Common myeloid progenitor, CD34-positive (primary cell): ENCODE measurements at regions of chr6 and their contacts with region 1.

Region 1: GRCh38 chr6:136737871-136738691 is 54.2 kb downstream of the MAP3K5 start:
- DNase-seq: peak; percentile 40 to 73 (median 62)
- H3K4me3 ChIP-seq: peak overlapping the region in 4 of 7 experiments; percentile 19 to 72 (median 58)
- H3K27ac ChIP-seq: peak overlapping the region; percentile 77 to 82
- H3K4me1 ChIP-seq: peaks cover 8 to 52% (median 30%) of the 10 kb centered on the region in 4 experiments
- H3K27me3 ChIP-seq: no peaks in the 10 kb centered on the region

Region 2: GRCh38 chr6:136711644-136712043 is 26.4 kb before region 1 on chr6:
- CTCF ChIA-PET with region 1: interaction called, 14 read pairs
- POLR2A ChIA-PET with region 1: no interaction called
- DNase-seq: no peak
- H3K4me3 ChIP-seq: no peak overlapping the region
- H3K27ac ChIP-seq: no peak overlapping the region
- H3K4me1 ChIP-seq: peaks cover 0 to 20% (median 8%) of the 10 kb centered on the region in 4 experiments
- H3K27me3 ChIP-seq: no peaks in the 10 kb centered on the region

Region 3: GRCh38 chr6:136719280-136720044 is 18.6 kb before region 1 on chr6:
- CTCF ChIA-PET with region 1: interaction called, 19 read pairs
- POLR2A ChIA-PET with region 1: interaction called, 4 read pairs
- DNase-seq: no peak
- H3K4me3 ChIP-seq: no peak overlapping the region
- H3K27ac ChIP-seq: peak overlapping the region in 1 of 2 experiments; percentile 2
- H3K4me1 ChIP-seq: peaks cover 5 to 47% (median 38%) of the 10 kb centered on the region in 4 experiments
- H3K27me3 ChIP-seq: no peaks in the 10 kb centered on the region

Region 4: DNA sequence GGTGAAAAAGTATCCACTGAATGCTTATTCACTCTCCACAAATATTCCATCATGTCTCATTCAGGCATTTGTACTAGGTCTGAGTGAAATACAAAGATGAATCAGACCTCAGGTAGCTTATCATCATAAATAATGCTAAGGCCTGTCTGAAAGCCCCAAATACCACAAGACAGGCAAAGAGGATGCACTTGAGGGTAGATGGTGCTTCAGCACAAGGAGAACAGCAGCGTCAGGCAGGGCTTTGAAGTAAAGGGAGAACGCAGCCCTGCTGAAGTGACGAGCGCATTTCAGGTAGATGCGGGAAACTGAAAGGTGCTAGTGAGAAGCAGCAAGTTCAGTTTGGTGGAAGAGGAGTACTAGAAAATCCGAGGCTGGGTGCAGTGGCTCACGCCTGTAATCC is 15.5 kb after region 1 on chr6:
- CTCF ChIA-PET with region 1: interaction called, 13 read pairs
- POLR2A ChIA-PET with region 1: interaction called, 3 read pairs
- DNase-seq: peak in 2 of 3 donors; percentile 41 to 59
- H3K4me3 ChIP-seq: no peak overlapping the region
- H3K27ac ChIP-seq: no peak overlapping the region
- H3K4me1 ChIP-seq: peaks cover 13 to 58% (median 42%) of the 10 kb centered on the region in 4 experiments
- H3K27me3 ChIP-seq: no peaks in the 10 kb centered on the region

Region 5: DNA sequence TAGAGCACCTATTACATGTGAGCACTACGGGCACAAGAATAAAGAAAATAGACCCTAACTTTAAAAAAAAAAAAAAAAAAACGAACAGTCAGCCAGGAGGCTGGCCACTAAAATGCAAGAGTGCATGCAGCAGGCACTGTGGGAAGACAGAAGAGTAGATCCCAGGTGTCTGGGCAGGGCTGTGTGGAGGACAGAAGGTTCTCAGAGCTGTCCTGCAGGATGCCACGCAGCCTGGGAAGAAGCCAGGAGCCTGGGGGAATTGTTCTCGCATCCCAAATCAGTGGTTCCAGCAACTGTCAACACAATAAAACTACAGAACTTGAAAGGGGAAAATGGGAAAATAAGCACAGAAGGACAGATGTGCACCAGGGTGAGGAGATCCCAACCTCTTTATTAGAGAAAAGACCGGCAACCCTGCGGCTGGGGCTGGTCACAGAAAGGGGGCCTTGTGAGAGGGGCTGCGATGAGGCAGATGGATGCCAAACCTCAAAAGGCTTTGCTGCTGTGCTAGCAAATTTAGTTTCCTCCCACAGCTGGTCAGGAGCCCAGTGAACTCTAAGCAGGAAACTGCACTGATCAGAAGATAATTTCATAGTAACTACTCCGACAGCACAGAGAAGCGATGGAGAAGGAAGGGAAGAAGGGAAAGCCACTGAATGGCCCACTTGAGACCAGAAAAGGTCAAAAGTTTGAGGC is 23.3 kb after region 1 on chr6:
- CTCF ChIA-PET with region 1: interaction called, 28 read pairs
- POLR2A ChIA-PET with region 1: no interaction called
- DNase-seq: peak in 2 of 3 donors; percentile 52 to 75
- H3K4me3 ChIP-seq: peak overlapping the region in 6 of 7 experiments; percentile 7 to 71 (median 52)
- H3K27ac ChIP-seq: peak overlapping the region; percentile 6 to 52
- H3K4me1 ChIP-seq: peaks cover 23 to 71% (median 58%) of the 10 kb centered on the region in 4 experiments
- H3K27me3 ChIP-seq: no peaks in the 10 kb centered on the region